ENCODE measurements at regions of chr7 and their contacts with region 1.

Region 1: GRCh38 chr7:135335628-135336139 is 102.0 kb downstream of the STRA8 start:
- DNase-seq: peak; percentile 70
- CTCF ChIP-seq: peak; percentile 38

Region 2: GRCh38 chr7:135265637-135266036 is 70.0 kb before region 1 on chr7:
- CTCF ChIA-PET with region 1: no interaction called
- POLR2A ChIA-PET with region 1: no interaction called
- DNase-seq: no peak
- CTCF ChIP-seq: no peak

Region 3: DNA sequence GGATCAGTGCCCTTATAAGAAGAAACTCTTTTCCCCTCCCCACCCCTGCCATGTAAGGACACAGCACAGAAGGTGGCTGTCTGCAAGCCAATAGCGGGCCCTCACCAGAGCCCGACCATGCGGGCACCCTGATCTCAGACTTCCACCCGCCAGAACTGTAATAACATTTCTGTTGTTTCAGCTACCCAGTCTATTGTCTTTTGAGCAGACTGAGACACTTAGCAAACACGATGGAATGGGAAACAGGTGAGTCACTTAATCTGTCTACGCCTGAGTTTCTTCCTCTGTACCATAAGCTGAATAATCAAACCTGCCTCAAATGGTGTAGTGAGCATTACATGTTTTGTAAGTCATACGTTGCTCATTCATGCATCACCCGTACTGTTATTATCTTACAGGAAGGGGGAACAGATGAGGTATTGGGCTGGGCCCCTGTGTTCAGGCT is 43.9 kb before region 1 on chr7:
- CTCF ChIA-PET with region 1: interaction called, 10 read pairs
- POLR2A ChIA-PET with region 1: no interaction called
- DNase-seq: no peak
- CTCF ChIP-seq: no peak

Region 4: GRCh38 chr7:135320277-135320676 is 15.4 kb before region 1 on chr7:
- CTCF ChIA-PET with region 1: interaction called, 14 read pairs
- POLR2A ChIA-PET with region 1: no interaction called
- DNase-seq: no peak
- CTCF ChIP-seq: no peak

Region 5: DNA sequence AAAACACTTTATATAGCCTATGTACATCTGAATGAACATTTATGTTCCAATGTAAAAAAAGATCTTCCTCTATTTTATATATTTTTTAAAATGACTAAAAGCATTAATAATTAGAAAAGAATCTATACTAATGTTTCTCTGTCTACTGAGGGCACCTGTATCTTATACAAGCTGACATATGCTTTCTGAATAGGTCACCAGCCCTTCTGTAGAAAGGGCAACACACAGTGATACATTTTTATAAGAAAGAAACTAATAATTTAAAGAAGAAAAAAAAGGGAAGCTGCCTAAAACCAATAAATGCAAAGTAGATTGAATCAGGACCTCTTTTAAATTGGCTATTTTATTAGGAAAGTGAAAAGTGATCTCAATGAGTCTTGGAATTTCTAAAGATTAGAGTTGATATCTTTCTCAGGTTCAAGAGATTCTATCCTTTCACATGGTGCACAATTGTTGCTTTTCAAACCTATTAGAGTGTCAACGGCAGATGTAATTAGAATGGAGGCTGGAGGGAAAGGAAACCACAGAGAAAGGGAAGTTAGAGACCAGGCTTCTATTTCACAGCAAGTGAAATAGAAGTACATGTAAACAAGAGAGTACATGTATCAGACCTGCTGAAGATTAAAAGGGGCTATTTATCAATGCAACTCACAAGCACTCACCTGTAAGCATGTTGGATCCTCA is 635.1 kb after region 1 on chr7:
- CTCF ChIA-PET with region 1: no interaction called
- POLR2A ChIA-PET with region 1: no interaction called
- DNase-seq: peak; percentile 20
- CTCF ChIP-seq: no peak